ENCODE measurements at regions of chr10 and their contacts with region 1.

Region 1: DNA sequence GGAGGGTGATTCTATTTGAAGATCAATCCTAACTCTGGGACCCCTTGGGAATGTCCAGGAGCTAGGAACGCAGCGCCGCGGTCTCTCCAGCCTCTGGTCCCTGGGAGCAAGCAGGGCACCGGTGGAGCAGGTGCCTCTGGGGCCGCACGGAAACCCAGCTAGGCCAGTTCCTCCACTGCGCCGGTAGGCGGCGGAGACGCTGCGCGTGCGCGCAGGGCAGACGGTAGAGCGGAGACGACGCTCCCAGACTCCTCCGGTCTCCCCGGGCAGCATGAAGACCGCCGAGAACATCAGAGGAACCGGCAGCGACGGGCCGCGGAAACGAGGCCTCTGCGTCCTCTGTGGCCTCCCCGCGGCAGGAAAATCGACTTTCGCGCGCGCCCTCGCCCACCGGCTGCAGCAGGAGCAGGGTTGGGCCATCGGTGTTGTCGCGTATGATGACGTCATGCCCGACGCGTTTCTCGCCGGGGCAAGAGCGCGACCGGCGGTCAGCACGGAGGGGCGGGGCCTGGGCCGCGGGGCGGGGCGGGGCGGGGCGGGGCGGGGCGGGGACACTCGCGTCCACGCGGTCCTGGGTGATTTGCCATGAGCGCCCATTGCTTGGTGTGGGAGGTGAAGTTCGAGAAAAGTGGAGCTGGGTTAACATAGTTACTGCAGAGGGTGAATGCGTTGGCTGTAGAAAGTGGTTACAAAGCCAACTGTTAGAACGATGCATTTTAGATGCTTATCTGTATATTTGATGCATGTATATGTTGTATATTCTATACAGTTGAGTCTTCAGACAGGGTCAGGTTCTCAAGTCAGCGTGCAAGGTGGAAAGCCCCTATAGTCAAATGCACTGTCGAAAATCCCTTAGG is at the start of gene PSTK:
- DNase-seq: peak; percentile 90
- H3K4me3 Mint-ChIP-seq: peak within 1 kb of the TSS; percentile 82
- H3K27ac Mint-ChIP-seq: peak within 1 kb of the TSS; percentile 99
- H3K4me1 Mint-ChIP-seq: peaks cover 19% of the 10 kb centered on the region
- H3K27me3 Mint-ChIP-seq: peaks cover 10% of the 10 kb centered on the region
- total RNA-seq, gene PSTK: 2.6 to 3.7 TPM

Region 2: DNA sequence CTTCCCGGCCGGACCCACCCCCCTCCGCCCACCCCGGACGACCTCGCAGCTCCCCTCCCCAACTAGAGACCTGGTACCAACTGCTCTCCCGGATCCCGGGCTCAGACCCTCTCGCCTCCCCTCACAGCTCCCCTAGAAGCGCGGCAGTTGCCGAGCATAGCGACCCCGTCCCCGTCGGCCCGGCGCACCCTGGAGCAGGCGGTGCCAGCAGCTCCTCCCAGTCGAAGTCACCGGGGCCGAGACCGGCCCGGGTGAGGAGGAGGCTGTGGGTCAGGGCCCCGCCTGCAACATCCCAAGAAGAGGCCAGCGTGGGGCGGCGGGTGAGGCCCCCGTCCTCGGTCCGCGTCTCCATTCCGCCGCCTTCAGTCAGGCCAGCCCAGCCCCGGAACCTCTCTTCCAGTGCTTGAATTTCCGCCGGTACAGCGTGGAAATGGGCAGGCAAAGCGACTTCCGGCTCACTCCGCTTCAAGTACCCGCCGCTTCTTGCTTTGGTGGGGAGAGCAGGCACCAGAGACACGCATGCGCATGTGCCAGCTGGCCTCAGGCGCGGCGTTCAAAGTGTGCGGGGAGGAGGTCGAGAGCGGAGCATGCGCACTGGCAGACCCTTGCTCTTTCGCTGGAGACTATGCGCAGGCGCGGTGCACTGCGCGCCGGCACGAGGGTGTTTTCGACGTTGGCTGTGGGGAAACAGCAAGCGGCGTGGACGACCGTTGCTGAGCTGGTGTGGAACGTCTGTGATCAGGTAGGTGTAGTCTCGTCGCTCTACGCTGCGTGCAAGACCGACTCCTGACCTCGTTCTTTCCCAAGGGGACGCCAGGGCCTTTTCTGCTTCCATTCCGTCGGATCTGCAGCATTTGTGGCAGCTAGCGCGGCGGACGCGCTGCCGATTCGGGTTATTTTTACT is 26.4 kb before region 1 on chr10 and contains the start of gene C10orf88:
- CTCF ChIA-PET with region 1: interaction called, 16 read pairs
- POLR2A ChIA-PET with region 1: no interaction called
- DNase-seq: peak; percentile 98
- H3K4me3 Mint-ChIP-seq: peak within 1 kb of the TSS; percentile 86
- H3K27ac Mint-ChIP-seq: peak within 1 kb of the TSS; percentile 92
- H3K4me1 Mint-ChIP-seq: peaks cover 41% of the 10 kb centered on the region
- H3K27me3 Mint-ChIP-seq: peaks cover 22% of the 10 kb centered on the region
- total RNA-seq, gene C10orf88: 12.7 to 16.0 TPM

Region 3: GRCh38 chr10:122962405-122962804 is 18.0 kb before region 1 on chr10:
- CTCF ChIA-PET with region 1: interaction called, 16 read pairs
- POLR2A ChIA-PET with region 1: no interaction called
- DNase-seq: no peak
- H3K4me3 Mint-ChIP-seq: no peak overlapping the region
- H3K27ac Mint-ChIP-seq: no peak overlapping the region
- H3K4me1 Mint-ChIP-seq: no peaks in the 10 kb centered on the region
- H3K27me3 Mint-ChIP-seq: peaks cover 21% of the 10 kb centered on the region

Region 4: DNA sequence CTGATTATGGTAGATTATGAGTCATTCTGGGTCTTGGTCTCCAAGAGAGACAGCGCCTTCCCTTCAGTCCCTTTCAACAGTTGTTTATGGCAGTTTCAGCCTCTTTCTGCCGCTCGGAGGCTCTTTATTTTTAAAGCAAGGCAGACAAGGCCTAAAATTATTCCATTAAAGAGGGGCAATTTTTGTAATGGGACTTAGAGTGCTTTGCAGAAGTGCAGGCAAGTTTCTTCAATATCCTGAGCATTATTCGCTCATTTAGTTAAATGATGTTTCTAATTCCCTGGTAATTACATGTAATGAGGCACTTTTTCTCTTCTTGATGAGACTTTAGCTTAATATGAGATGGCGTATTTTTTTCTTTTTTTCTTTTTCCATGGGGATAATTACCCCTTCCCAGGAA is 207.3 kb after region 1 on chr10:
- CTCF ChIA-PET with region 1: no interaction called
- POLR2A ChIA-PET with region 1: no interaction called
- DNase-seq: no peak
- H3K4me3 Mint-ChIP-seq: no peak overlapping the region
- H3K27ac Mint-ChIP-seq: no peak overlapping the region
- H3K4me1 Mint-ChIP-seq: no peaks in the 10 kb centered on the region
- H3K27me3 Mint-ChIP-seq: no peaks in the 10 kb centered on the region

Measured in activated CD4-positive, alpha-beta T cell treated with anti-CD3 and anti-CD28 coated beads, Interleukin-2, amount 10 ng/mL, durations not matched to agents 7 days and 5 days (primary cell).